Left colon (tissue), 2 donors: ENCODE measurements at regions of chr11 and their contacts with region 1.

Region 1: DNA sequence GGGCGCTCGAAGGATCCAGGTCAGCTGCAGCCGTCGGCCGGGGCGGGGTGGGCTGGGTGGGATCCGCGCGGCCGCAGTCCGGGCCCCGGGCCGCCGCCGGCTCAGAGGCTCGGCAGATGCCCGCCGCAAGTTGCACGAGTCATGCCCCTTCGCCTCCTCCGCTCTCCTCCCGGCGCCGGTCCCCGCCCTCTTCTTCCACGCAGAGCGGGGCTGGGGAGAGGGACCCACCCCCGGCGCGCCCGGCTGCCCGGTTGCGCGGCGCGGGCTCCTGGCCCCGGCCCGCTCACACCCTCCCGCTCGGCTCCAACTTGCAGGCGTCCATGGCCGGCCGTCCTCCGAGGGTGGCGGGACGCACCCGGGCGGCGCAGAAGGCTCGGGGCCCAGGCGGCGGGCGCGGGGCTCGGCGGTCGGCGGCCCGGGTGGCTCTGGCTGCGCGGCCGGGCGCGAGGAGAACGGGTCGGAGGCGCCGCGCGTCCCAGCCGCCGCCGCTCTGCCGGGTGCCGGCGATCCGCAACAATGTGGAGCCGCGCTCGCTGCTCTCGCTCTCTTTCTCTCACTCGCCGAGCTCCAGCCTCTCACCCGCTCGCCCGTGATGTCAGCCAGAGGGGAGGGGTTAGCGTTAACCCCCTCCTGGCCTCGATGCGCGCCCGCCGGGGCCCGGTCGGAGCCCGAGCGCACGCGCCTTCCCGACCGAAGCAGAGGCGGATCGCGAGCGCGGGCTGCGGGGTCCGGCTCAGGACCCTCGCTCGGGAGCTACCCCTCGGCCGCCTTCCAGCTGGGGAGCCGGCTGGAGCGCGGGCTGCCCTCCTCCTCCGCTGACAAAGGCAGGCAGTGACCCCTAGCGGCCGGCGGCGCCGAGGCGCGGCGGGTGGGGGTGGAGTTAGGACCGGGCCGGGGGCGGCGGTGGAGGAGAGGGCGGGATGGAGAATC is at the start of gene NECTIN1:
- DNase-seq: peak; percentile 82 to 93
- ATAC-seq: peak; percentile 77
- total RNA-seq, gene NECTIN1: 43.9 to 44.1 TPM

Region 2: DNA sequence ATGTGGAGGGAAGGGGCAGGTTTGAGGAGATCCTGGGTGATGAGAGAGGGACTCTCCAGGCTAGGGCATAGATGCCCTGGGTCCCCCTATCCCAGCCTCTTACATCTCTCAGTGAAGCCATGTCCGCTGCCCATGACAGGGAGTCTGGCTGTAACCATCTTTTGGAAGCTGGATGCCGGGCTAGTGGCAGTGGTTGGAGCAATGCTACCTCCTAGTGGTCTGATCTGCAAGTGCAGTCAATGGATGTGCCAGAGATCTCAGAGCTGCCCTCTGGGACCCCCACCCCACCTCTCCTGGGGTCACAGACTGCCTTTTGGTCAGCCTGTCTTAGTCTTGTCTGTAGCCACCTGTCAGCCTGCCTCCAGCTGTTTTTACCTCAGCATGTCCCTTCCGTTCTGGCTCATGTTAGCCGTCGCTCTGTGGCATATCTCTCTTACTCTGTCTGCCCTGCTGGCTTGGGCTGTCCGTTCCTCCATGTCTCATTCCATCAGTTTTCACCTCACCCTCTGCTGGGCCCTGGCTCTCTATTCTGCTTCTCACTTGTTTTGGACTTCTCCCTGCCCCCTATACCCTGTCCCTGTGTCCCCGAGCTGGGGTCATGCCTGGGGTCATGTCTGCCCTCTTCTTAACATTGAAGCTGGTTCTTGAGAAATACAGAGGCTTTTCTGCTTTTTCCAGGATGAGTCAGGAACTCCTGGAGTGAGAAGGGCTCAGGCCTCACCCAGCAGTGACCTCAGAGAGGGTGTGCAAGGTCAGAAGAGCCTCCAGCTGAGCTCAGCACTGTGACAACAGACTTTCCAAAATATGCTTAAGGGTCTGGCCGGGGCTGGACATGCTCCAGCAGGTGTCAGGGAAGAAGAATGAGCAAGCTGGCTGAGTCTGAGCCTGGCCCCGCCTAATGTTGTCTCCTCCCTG is 254.0 kb before region 1 on chr11:
- intact Hi-C with region 1: loop called in 1 of 2 experiments (anchors 10 kb)
- DNase-seq: peak in 1 of 2 donors; percentile 46
- ATAC-seq: peak; percentile 65

Region 3: GRCh38 chr11:119533921-119534736 is 194.8 kb before region 1 on chr11:
- intact Hi-C with region 1: no loop called
- DNase-seq: peak; percentile 38 to 79
- ATAC-seq: peak; percentile 85

Region 4: DNA sequence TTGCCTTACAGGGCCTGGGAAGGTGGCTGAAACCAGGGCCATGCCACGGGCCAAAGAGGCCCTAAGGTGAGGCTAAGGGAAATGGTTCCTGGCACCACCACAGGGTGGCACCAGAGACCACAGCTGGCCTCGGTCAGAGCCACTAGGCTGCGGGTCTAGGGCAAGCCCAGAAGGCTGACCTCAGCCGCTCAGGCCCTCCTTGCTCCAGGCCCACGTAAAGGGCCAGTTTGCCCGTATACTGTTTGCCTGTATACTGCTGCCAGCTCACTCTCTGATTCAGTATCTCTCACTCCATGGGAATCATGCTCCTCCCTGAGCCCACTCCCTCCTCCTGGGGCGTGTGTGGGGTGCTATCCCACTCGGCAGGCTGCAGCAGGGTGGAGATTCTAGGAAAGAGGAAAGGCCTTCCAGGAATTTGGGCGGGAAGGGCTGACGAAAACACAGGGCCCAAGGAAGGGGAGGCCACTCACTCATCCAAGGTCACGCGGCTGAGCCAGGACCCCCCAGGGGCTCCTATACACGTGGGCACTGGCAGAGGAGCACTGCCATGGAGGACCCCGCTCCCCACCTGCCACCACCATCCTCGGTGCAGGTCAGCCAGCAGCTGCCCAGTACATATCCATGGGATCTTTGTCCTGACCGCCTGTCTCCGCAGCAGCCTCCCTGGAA is 62.3 kb before region 1 on chr11:
- intact Hi-C with region 1: loop called in 1 of 2 experiments (anchors 5 kb)
- DNase-seq: peak; percentile 51 to 74
- ATAC-seq: peak; percentile 91